Heart left ventricle (tissue), 16 donors: ENCODE measurements at regions of chr9 and their contacts with region 1.

Region 1: GRCh38 chr9:4984621-4985385 is at the start of gene JAK2:
- DNase-seq: peak; percentile 92 to 95 (median 94)
- ATAC-seq: peak; percentile 88 to 98 (median 96)
- H3K4me3 ChIP-seq: peak within 1 kb of the TSS; percentile 72 to 94 (median 79)
- H3K27ac ChIP-seq: peak within 1 kb of the TSS; percentile 93 to 100 (median 98)
- H3K4me1 ChIP-seq: peaks cover 0 to 67% (median 27%) of the 10 kb centered on the region in 12 donors
- H3K27me3 ChIP-seq: no peaks in the 10 kb centered on the region
- CTCF ChIP-seq: peak in 11 of 12 donors; percentile 31 to 74 (median 50)
- POLR2A ChIP-seq: peak in 1 of 2 donors; percentile 63
- total RNA-seq, gene JAK2: 17.0 to 62.9 (median 33.3) TPM

Region 2: GRCh38 chr9:4662108-4662988 is 322.5 kb before region 1 on chr9 and contains the start of gene PLPP6:
- intact Hi-C with region 1: loop called in 1 of 10 experiments (anchors 5 kb)
- DNase-seq: peak; percentile 88 to 92 (median 90)
- ATAC-seq: peak; percentile 92 to 97 (median 96)
- H3K4me3 ChIP-seq: peak within 1 kb of the TSS; percentile 50 to 96 (median 81)
- H3K27ac ChIP-seq: peak within 1 kb of the TSS; percentile 27 to 90 (median 78)
- H3K4me1 ChIP-seq: peaks cover 0 to 51% (median 32%) of the 10 kb centered on the region in 12 donors
- H3K27me3 ChIP-seq: no peaks in the 10 kb centered on the region
- CTCF ChIP-seq: peak; percentile 29 to 72 (median 52)
- POLR2A ChIP-seq: peak in 1 of 2 donors; percentile 74
- total RNA-seq, gene PLPP6: 2.4 to 5.4 (median 3.6) TPM

Region 3: GRCh38 chr9:4762108-4762885 is 222.5 kb before region 1 on chr9:
- intact Hi-C with region 1: loop called (anchors 1 to 5 kb)
- DNase-seq: peak in 4 of 5 donors; percentile 59 to 71 (median 66)
- ATAC-seq: peak; percentile 32 to 62 (median 50)
- H3K4me3 ChIP-seq: peak overlapping the region in 9 of 12 donors; percentile 7 to 39 (median 32)
- H3K27ac ChIP-seq: peak overlapping the region in 6 of 12 donors; percentile 3 to 63 (median 36)
- H3K4me1 ChIP-seq: peaks cover 0 to 45% (median 11%) of the 10 kb centered on the region in 12 donors
- H3K27me3 ChIP-seq: no peaks in the 10 kb centered on the region
- CTCF ChIP-seq: peak; percentile 61 to 91 (median 81)
- POLR2A ChIP-seq: no peak

Region 4: GRCh38 chr9:4849364-4849763 is 135.4 kb before region 1 on chr9:
- intact Hi-C with region 1: loop called in 3 of 10 experiments (anchors 10 kb)
- DNase-seq: no peak
- ATAC-seq: no peak
- H3K4me3 ChIP-seq: no peak overlapping the region
- H3K27ac ChIP-seq: no peak overlapping the region
- H3K4me1 ChIP-seq: no peaks in the 10 kb centered on the region
- H3K27me3 ChIP-seq: no peaks in the 10 kb centered on the region
- CTCF ChIP-seq: peak in 4 of 12 donors; percentile 5 to 18 (median 10)
- POLR2A ChIP-seq: no peak

Region 5: GRCh38 chr9:4939118-4939561 is 45.7 kb before region 1 on chr9:
- intact Hi-C with region 1: loop called in 5 of 10 experiments (anchors 5 to 10 kb)
- DNase-seq: no peak
- ATAC-seq: peak in 3 of 4 donors; percentile 48 to 77 (median 61)
- H3K4me3 ChIP-seq: no peak overlapping the region
- H3K27ac ChIP-seq: peak overlapping the region in 1 of 12 donors; percentile 91
- H3K4me1 ChIP-seq: peaks cover 0 to 88% (median 21%) of the 10 kb centered on the region in 12 donors
- H3K27me3 ChIP-seq: no peaks in the 10 kb centered on the region
- CTCF ChIP-seq: no peak
- POLR2A ChIP-seq: no peak

Region 6: GRCh38 chr9:5073701-5074100 is 88.9 kb after region 1 on chr9:
- intact Hi-C with region 1: no loop called
- DNase-seq: no peak
- ATAC-seq: no peak
- H3K4me3 ChIP-seq: no peak overlapping the region
- H3K27ac ChIP-seq: no peak overlapping the region
- H3K4me1 ChIP-seq: peaks cover 0 to 3% (median 0%) of the 10 kb centered on the region in 12 donors
- H3K27me3 ChIP-seq: no peaks in the 10 kb centered on the region
- CTCF ChIP-seq: peak in 2 of 12 donors; percentile 5 to 7
- POLR2A ChIP-seq: no peak

Region 7: DNA sequence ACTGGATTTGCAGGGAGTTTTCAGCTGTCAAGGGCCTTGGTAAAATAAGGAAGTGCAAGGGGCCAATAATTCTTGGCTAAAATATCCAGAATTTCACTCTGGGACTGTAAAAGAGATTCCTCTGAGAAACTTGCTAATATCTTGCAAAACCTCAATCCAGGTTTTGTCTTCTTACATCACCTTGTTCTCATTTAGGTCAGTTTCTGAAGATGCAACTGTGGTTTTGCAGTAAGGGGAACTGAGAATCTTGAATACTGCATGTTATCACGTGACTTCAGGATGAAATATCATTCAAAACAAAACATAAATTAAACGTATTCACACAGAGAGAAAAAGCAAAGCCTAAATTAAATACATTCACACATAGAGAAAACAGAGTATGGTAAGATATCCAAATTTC is 609.1 kb after region 1 on chr9:
- intact Hi-C with region 1: loop called in 1 of 10 experiments (anchors 5 kb)
- DNase-seq: no peak
- ATAC-seq: no peak
- H3K4me3 ChIP-seq: no peak overlapping the region
- H3K27ac ChIP-seq: no peak overlapping the region
- H3K4me1 ChIP-seq: peaks cover 0 to 21% (median 3%) of the 10 kb centered on the region in 12 donors
- H3K27me3 ChIP-seq: no peaks in the 10 kb centered on the region
- CTCF ChIP-seq: no peak
- POLR2A ChIP-seq: no peak